ENCODE measurements at regions of chr1 and their contacts with region 1.

Region 1: DNA sequence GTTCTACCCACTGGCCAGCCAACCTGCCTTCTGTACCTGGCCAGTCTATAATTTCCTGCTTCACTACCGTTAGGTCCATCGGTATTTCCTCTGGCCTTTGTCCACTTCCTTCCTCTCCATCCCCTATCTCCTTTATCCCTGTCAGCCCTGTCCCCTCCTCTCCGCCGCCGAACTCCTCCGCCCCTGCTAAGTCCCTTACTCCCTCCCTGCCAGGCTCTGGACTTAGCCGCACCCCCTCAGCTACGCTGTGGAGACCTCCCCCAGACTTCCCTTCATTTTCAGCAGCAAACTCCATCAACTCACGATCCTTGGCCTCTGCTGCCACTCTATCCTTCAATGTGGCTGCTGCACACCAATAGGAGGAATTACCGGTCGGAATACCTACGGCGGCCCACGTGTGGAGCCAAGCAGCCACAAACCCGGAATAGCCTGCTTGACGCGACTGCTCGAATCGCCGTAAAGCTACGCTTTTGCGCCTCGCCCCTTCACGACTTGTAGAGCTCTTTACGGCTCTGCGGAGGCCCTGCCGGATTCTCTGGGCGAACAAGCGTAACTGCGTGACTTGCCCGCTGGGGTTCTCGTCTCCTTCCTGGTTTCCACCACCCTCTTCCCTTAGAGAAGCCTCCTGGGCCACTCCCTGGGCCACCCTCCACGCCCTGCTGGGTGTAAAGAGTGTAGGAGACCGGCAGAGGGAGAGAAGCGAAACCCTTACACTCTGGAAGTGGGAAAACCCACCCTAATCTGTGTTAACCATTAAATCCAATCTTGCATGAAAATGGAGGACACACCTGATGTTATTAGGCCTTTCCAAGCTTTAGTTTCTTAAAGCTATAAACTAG is at the start of gene ZNHIT6:
- DNase-seq: peak; percentile 94 to 95
- ATAC-seq: peak; percentile 97
- H3K4me3 ChIP-seq: peak within 1 kb of the TSS; percentile 83 to 97
- H3K27ac ChIP-seq: peak within 1 kb of the TSS in 1 of 2 donors; percentile 66
- H3K4me1 ChIP-seq: no peaks in the 10 kb centered on the region
- H3K27me3 ChIP-seq: no peaks in the 10 kb centered on the region
- total RNA-seq, gene ZNHIT6: 19.1 to 23.8 TPM

Region 2: DNA sequence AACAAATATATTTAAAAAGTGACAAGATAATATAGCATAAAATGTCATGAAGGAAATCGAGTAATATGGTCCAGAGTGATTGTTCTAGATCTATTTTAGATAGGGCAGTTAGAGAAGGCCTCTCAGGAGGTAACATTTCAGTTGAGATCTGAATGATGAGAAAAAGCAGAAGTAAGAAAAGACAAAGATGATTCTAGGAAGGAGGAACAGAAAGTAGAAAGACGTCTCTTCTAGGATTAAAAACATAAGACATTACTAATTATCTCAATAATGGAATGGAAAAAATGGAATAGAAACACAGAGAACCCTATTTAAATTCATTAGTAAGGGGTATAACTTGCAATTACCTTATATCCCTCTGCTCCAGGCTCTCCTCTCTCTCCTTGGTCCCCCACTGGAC is 130.0 kb after region 1 on chr1:
- intact Hi-C with region 1: no loop called
- DNase-seq: no peak
- ATAC-seq: no peak
- H3K4me3 ChIP-seq: no peak overlapping the region
- H3K27ac ChIP-seq: no peak overlapping the region
- H3K4me1 ChIP-seq: no peaks in the 10 kb centered on the region
- H3K27me3 ChIP-seq: no peaks in the 10 kb centered on the region

Region 3: DNA sequence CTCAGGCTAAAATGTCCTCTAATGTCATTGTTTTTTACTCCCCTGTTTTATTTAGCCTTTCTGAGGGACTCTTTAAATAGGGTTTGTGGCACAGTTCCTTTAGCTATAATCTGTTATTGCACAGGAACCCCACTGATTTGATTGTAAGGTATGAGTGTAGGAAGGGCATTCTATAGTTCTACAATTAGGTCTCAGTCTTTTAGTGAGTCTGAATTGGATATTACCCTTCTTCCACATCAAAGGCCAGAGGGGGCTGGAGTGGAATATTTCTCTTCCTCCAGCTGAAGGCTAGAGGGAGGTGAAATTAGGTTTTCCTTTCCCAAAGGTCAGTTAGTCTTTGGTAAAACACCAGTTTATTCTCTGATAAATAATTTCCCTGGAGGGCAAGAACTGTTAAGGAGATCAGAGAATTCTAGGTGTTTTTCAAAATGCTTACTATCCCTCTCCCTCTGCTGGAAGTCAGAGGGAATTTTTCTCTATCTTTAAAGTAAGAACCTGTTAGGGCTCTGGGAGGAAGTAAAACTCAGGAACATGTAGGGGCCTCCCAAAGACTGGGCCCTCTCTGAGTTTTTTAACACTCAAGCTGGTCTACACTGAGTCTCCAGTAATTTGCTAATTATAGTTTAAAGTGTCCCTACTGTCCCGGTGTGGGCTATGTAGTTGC is 176.3 kb after region 1 on chr1:
- intact Hi-C with region 1: loop called in 1 of 2 experiments (anchors 10 kb)
- DNase-seq: no peak
- ATAC-seq: no peak
- H3K4me3 ChIP-seq: no peak overlapping the region
- H3K27ac ChIP-seq: no peak overlapping the region
- H3K4me1 ChIP-seq: no peaks in the 10 kb centered on the region
- H3K27me3 ChIP-seq: no peaks in the 10 kb centered on the region

Measured in aorta (tissue), 5 donors.